Heart left ventricle (tissue), 16 donors: ENCODE measurements at regions of chr15 and their contacts with region 1.

Region 1: DNA sequence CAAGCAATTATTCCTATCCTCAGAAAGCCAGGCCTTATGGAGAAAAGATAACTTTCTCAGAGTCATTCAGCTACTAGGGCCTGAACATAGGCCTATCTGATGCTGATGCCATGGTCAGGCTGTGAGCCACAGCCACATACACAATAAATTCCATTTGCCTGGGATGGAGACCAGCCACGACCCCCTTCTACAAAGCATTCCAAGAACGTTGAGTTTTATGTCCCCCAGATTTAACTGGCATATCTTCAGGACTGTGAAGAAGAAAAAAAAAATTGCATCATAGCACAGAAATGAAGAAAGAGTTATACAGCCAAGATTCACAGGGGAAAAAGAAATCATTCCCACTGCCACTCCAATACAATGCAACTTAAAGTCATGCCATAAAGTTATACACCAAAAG is 100.0 kb downstream of the THBS1 start:
- DNase-seq: no peak
- ATAC-seq: no peak
- H3K4me3 ChIP-seq: no peak overlapping the region
- H3K27ac ChIP-seq: peak overlapping the region in 2 of 12 donors; percentile 10 to 42
- H3K4me1 ChIP-seq: peaks cover 0 to 6% (median 0%) of the 10 kb centered on the region in 12 donors
- H3K27me3 ChIP-seq: no peaks in the 10 kb centered on the region
- CTCF ChIP-seq: no peak
- POLR2A ChIP-seq: no peak

Region 2: DNA sequence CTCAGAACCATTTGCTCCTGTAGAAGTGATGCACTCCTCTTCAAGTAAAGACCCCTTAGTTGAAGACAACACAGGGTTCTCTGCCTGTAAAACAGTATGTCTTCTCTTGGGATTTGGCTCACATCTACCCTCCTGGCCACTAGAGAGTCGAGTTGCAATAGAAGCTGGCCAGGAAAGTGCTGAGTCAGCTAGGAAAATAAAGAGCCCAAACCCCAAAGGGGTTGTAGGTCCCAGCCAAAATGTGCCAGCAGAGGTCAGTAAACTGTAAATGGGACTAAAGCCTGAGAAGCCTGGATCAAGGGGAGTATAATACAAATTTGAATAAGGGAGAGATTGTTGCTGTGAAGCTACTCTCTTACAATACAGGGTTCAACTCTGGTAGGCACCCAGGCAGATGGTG is 137.2 kb before region 1 on chr15:
- intact Hi-C with region 1: no loop called
- DNase-seq: no peak
- ATAC-seq: no peak
- H3K4me3 ChIP-seq: no peak overlapping the region
- H3K27ac ChIP-seq: no peak overlapping the region
- H3K4me1 ChIP-seq: peaks cover 0 to 9% (median 0%) of the 10 kb centered on the region in 12 donors
- H3K27me3 ChIP-seq: no peaks in the 10 kb centered on the region
- CTCF ChIP-seq: no peak
- POLR2A ChIP-seq: no peak

Region 3: GRCh38 chr15:39602143-39602542 is 78.7 kb before region 1 on chr15:
- intact Hi-C with region 1: no loop called
- DNase-seq: no peak
- ATAC-seq: no peak
- H3K4me3 ChIP-seq: no peak overlapping the region
- H3K27ac ChIP-seq: no peak overlapping the region
- H3K4me1 ChIP-seq: peaks cover 0 to 4% (median 0%) of the 10 kb centered on the region in 12 donors
- H3K27me3 ChIP-seq: no peaks in the 10 kb centered on the region
- CTCF ChIP-seq: no peak
- POLR2A ChIP-seq: no peak

Region 4: DNA sequence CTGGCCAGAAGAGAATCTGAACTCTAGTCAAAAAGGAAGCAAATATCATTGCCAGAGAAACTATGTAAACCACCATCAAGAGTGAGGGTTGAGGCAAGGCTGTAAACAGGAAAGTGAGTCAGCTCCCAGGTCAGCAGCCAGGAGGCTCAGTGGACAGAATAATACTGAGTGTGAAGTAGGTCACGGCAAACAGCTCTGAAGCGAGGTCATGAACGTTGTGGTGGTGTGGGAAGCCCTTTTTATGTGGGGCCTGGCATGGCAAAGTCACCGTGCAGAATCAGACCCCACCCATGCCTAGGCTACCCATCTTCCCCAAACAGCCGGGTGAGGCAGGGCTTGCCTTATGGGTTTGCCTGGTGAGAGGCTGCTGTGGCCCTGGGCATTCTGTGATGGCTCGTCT is 56.1 kb before region 1 on chr15:
- intact Hi-C with region 1: loop called in 1 of 10 experiments (anchors 5 kb)
- DNase-seq: peak in 4 of 5 donors; percentile 62 to 72 (median 68)
- ATAC-seq: peak; percentile 37 to 81 (median 77)
- H3K4me3 ChIP-seq: no peak overlapping the region
- H3K27ac ChIP-seq: peak overlapping the region; percentile 19 to 95 (median 66)
- H3K4me1 ChIP-seq: peaks cover 3 to 73% (median 47%) of the 10 kb centered on the region in 12 donors
- H3K27me3 ChIP-seq: no peaks in the 10 kb centered on the region
- CTCF ChIP-seq: peak in 2 of 12 donors; percentile 8 to 28
- POLR2A ChIP-seq: no peak

Region 5: DNA sequence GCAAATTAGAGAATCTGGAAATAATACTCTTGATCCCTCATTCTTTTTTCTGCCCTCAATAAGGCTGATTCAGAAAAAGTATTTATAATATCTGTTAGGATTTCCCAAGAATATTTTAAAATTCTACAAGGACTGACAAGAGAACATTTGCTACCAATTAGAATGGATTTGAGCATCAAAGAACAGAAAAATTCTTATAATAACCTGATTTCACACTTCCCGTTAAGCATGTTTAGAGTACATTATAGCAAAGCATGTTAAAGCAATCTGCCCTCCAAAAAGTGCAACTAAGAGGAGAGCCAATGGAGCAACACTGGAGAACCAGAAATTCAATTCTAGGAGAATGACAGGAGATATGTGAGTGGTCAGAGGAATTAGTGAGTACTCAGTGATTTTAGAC is 42.8 kb before region 1 on chr15:
- intact Hi-C with region 1: no loop called
- DNase-seq: no peak
- ATAC-seq: no peak
- H3K4me3 ChIP-seq: no peak overlapping the region
- H3K27ac ChIP-seq: no peak overlapping the region
- H3K4me1 ChIP-seq: peaks cover 0 to 13% (median 5%) of the 10 kb centered on the region in 12 donors
- H3K27me3 ChIP-seq: no peaks in the 10 kb centered on the region
- CTCF ChIP-seq: no peak
- POLR2A ChIP-seq: no peak

Region 6: DNA sequence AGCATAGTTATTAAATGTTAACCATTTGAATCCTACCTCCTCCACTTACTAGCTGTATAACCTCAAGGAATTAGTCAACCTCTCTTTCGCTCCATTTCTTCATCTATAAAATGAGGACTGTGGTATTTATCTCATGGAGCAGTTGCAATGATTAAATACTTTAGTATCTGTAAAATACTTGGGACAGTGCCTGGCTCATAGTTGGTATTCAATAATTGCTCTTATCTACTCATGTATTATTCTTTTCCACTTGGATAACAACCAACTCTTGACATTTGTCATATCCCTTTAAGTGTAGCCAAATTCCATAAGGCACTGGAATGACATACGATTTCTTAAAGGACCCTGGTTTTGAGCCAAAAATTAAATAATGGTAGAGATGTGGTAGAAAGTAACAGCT is 29.8 kb after region 1 on chr15:
- intact Hi-C with region 1: no loop called
- DNase-seq: no peak
- ATAC-seq: no peak
- H3K4me3 ChIP-seq: no peak overlapping the region
- H3K27ac ChIP-seq: no peak overlapping the region
- H3K4me1 ChIP-seq: no peaks in the 10 kb centered on the region
- H3K27me3 ChIP-seq: no peaks in the 10 kb centered on the region
- CTCF ChIP-seq: no peak
- POLR2A ChIP-seq: no peak